IMR-90 (cell line): ENCODE measurements at regions of chr12 and their contacts with region 1.

Region 1: GRCh38 chr12:101653503-101653902 is 43.9 kb upstream of the CHPT1 start:
- DNase-seq: no peak
- ATAC-seq: no peak
- H3K4me3 ChIP-seq: no peak overlapping the region
- H3K27ac ChIP-seq: no peak overlapping the region
- H3K4me1 ChIP-seq: no peaks in the 10 kb centered on the region
- H3K27me3 ChIP-seq: no peaks in the 10 kb centered on the region
- CTCF ChIP-seq: no peak
- POLR2A ChIP-seq: no peak
- RAD21 ChIP-seq: no peak

Region 2: GRCh38 chr12:101607902-101608742 is 45.4 kb before region 1 on chr12:
- CTCF ChIA-PET with region 1: no interaction called
- POLR2A ChIA-PET with region 1: no interaction called
- dilution Hi-C with region 1: no loop called
- in situ Hi-C with region 1: no loop called
- intact Hi-C with region 1: loop called (anchors 1 kb)
- DNase-seq: no peak
- ATAC-seq: no peak
- H3K4me3 ChIP-seq: no peak overlapping the region
- H3K27ac ChIP-seq: no peak overlapping the region
- H3K4me1 ChIP-seq: no peaks in the 10 kb centered on the region
- H3K27me3 ChIP-seq: no peaks in the 10 kb centered on the region
- CTCF ChIP-seq: no peak
- POLR2A ChIP-seq: no peak
- RAD21 ChIP-seq: no peak

Region 3: GRCh38 chr12:101782273-101782731 is 128.8 kb after region 1 on chr12:
- CTCF ChIA-PET with region 1: no interaction called
- POLR2A ChIA-PET with region 1: no interaction called
- dilution Hi-C with region 1: no loop called
- in situ Hi-C with region 1: no loop called
- intact Hi-C with region 1: no loop called
- DNase-seq: peak; percentile 76
- ATAC-seq: peak; percentile 60
- H3K4me3 ChIP-seq: no peak overlapping the region
- H3K27ac ChIP-seq: no peak overlapping the region
- H3K4me1 ChIP-seq: peaks cover 9% of the 10 kb centered on the region
- H3K27me3 ChIP-seq: no peaks in the 10 kb centered on the region
- CTCF ChIP-seq: no peak
- POLR2A ChIP-seq: no peak
- RAD21 ChIP-seq: no peak